ENCODE measurements at regions of chr10 and their contacts with region 1.

Region 1: DNA sequence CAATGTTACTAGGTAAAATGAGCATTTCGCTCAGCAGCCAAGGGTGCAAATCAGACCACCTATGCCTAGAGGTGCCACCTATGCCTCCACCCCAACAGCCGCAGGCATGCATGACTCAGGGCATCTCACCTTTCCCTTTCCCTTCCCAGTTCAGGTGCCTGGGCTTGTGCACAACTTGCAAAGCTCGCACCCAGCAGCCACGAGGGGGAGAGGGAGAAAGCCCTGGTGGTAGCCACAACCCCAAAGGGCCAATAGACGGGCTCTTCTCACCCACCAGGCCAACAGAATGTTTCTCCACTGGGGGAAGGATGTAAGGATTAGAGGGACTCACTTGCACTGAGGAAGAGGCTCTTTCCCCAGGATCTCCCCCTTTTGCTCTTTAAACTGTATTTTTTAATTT is 462.3 kb upstream of the PCDH15 start:
- DNase-seq: no peak
- ATAC-seq: no peak
- H3K4me3 Mint-ChIP-seq: no peak overlapping the region
- H3K27ac Mint-ChIP-seq: no peak overlapping the region
- H3K4me1 Mint-ChIP-seq: no peaks in the 10 kb centered on the region
- H3K27me3 Mint-ChIP-seq: no peaks in the 10 kb centered on the region
- CTCF ChIP-seq: no peak

Region 2: GRCh38 chr10:53601260-53601875 is 1662.0 kb before region 1 on chr10:
- CTCF ChIA-PET with region 1: no interaction called
- POLR2A ChIA-PET with region 1: no interaction called
- intact Hi-C with region 1: loop called (anchors 5 kb)
- DNase-seq: no peak
- ATAC-seq: no peak
- H3K4me3 Mint-ChIP-seq: no peak overlapping the region
- H3K27ac Mint-ChIP-seq: no peak overlapping the region
- H3K4me1 Mint-ChIP-seq: no peaks in the 10 kb centered on the region
- H3K27me3 Mint-ChIP-seq: no peaks in the 10 kb centered on the region
- CTCF ChIP-seq: peak; percentile 19